Heart left ventricle (tissue), 16 donors: ENCODE measurements at regions of chr18 and their contacts with region 1.

Region 1: GRCh38 chr18:79200546-79201268 is 131.5 kb downstream of the ATP9B start:
- DNase-seq: peak in 4 of 5 donors; percentile 39 to 74 (median 56)
- ATAC-seq: peak in 3 of 4 donors; percentile 79 to 95 (median 81)
- H3K4me3 ChIP-seq: no peak overlapping the region
- H3K27ac ChIP-seq: no peak overlapping the region
- H3K4me1 ChIP-seq: peaks cover 0 to 3% (median 0%) of the 10 kb centered on the region in 12 donors
- H3K27me3 ChIP-seq: no peaks in the 10 kb centered on the region
- CTCF ChIP-seq: no peak
- POLR2A ChIP-seq: no peak

Region 2: DNA sequence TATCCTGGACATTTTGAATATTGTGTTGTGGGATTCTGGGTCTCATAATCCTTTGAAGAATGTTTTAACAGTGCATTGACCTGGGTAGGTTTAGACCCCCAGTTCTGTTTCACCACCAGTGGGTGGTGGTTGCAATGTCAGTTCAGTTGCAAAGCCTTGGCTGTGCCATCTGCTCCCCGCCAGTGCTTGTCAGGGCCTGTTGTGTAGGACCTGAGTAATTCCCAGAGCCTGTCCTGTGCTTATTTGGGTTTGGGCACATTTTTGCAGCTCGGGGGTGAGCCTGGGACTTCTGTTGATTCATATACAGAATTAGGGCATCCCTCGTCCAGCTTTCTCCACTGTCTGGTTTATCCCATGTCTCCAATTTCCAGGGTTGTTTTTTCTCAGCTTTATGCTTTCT is 106.7 kb before region 1 on chr18:
- intact Hi-C with region 1: no loop called
- DNase-seq: no peak
- ATAC-seq: no peak
- H3K4me3 ChIP-seq: no peak overlapping the region
- H3K27ac ChIP-seq: no peak overlapping the region
- H3K4me1 ChIP-seq: peaks cover 0 to 14% (median 0%) of the 10 kb centered on the region in 12 donors
- H3K27me3 ChIP-seq: no peaks in the 10 kb centered on the region
- CTCF ChIP-seq: no peak
- POLR2A ChIP-seq: no peak

Region 3: DNA sequence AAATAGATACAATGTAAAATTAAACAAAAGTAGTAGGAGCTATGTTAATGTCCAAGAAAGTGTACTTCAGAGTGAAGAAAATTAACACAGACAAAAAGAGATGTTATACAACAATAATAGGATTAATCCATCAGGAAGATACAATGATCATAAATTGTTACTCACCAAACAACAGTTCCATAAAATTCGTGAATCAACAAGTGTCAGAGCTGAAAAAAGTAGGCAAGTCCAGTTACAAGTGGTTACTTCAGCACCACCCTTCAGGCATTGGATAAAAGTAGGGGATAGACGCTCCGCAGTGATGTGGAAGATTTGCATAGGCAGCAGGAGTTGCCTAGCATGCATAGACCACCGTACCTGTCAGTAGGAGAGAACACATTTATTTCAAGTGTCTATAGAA is 53.7 kb before region 1 on chr18:
- intact Hi-C with region 1: loop called in 1 of 10 experiments (anchors 10 kb)
- DNase-seq: no peak
- ATAC-seq: no peak
- H3K4me3 ChIP-seq: no peak overlapping the region
- H3K27ac ChIP-seq: no peak overlapping the region
- H3K4me1 ChIP-seq: no peaks in the 10 kb centered on the region
- H3K27me3 ChIP-seq: no peaks in the 10 kb centered on the region
- CTCF ChIP-seq: no peak
- POLR2A ChIP-seq: no peak